ENCODE measurements at regions of chr9 and their contacts with region 1.

Region 1: GRCh38 chr9:110357505-110357904 is 19.8 kb upstream of the TXNDC8 start:
- DNase-seq: no peak
- H3K4me3 ChIP-seq: no peak overlapping the region
- H3K27ac ChIP-seq: no peak overlapping the region
- H3K4me1 ChIP-seq: no peaks in the 10 kb centered on the region
- H3K27me3 ChIP-seq: no peaks in the 10 kb centered on the region
- CTCF ChIP-seq: no peak
- EP300 ChIP-seq: no peak
- POLR2A ChIP-seq: no peak
- RAD21 ChIP-seq: no peak

Region 2: DNA sequence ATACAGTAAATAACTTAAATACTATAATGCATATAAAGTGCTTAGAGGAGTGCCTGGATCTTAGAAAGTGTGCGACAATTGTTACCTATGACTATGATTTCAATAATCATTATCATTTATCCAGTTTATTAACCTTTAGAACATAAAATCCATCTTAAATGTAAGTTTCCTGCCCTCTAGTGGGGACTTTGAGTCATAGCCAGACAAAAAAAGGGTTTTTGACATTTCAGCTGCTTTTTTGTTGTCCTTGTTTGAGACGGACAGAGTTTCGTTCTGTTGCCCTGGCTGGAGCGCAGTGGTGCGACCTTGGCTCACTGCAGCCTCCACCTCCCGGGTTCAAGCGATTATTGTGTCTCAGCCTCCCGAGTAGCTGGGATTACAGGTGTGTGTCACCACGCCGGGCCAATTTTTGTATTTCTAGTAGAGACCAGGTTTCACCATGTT is 139.8 kb before region 1 on chr9:
- CTCF ChIA-PET with region 1: no interaction called
- POLR2A ChIA-PET with region 1: no interaction called
- DNase-seq: no peak
- H3K4me3 ChIP-seq: no peak overlapping the region
- H3K27ac ChIP-seq: no peak overlapping the region
- H3K4me1 ChIP-seq: no peaks in the 10 kb centered on the region
- H3K27me3 ChIP-seq: no peaks in the 10 kb centered on the region
- CTCF ChIP-seq: peak in 2 of 3 experiments; percentile 41 to 74; a peak in 2 of 4 replicates
- EP300 ChIP-seq: no peak
- POLR2A ChIP-seq: no peak
- RAD21 ChIP-seq: peak; percentile 46 to 61

Region 3: DNA sequence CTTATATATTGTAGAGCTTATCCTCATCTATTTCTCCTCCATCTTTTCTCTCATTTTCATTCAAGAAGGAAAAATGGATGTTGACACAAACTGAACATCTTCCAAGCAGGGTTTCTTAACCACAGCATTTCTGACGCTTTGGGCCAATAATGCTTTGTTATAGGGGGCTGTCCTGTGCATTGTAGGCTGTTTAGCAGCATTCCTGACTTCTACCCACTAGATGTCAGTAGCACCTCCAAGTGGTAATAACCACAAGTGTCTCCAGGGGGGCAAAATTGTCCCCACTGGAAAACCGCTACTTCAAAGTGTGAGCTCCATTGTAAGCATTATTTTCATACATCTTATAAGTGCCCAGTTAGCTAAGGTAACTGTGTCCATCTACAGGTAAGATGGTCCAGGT is 17.2 kb before region 1 on chr9:
- CTCF ChIA-PET with region 1: interaction called, 11 read pairs
- POLR2A ChIA-PET with region 1: no interaction called
- DNase-seq: no peak
- H3K4me3 ChIP-seq: no peak overlapping the region
- H3K27ac ChIP-seq: no peak overlapping the region
- H3K4me1 ChIP-seq: no peaks in the 10 kb centered on the region
- H3K27me3 ChIP-seq: no peaks in the 10 kb centered on the region
- CTCF ChIP-seq: peak in 2 of 3 experiments; percentile 67 to 85; a peak in 3 of 4 replicates
- EP300 ChIP-seq: no peak
- POLR2A ChIP-seq: no peak
- RAD21 ChIP-seq: peak; percentile 67 to 75